MCF 10A (cell line): ENCODE measurements at regions of chr7 and their contacts with region 1.

Region 1: DNA sequence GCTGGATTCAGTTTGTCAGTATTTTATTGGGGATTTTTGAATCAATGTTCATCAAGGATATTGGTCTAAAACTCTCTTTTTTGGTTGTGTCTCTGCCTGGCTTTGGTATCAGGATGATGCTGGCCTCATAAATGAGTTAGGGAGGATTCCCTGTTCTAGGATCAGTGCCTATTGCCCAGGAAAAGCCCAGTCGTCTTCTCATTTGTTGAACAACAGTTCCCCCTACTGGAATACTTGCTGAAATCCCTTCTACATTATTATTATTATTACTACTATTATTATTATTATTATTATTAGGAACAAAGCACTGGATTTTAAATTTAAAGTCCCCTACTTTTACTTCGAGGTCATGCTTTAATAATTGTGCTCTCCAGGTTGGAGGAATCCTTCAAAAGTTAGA is 528.9 kb downstream of the MAGI2 start:
- DNase-seq: peak; percentile 24
- H3K4me3 Mint-ChIP-seq: no peak overlapping the region
- H3K27ac Mint-ChIP-seq: no peak overlapping the region
- H3K4me1 Mint-ChIP-seq: no peaks in the 10 kb centered on the region
- H3K27me3 Mint-ChIP-seq: peaks cover 23% of the 10 kb centered on the region
- CTCF ChIP-seq: peak; percentile 43

Region 2: GRCh38 chr7:77657427-77658224 is 1267.0 kb before region 1 on chr7:
- CTCF ChIA-PET with region 1: no interaction called
- POLR2A ChIA-PET with region 1: no interaction called
- intact Hi-C with region 1: loop called (anchors 10 kb)
- DNase-seq: peak; percentile 65
- H3K4me3 Mint-ChIP-seq: no peak overlapping the region
- H3K27ac Mint-ChIP-seq: no peak overlapping the region
- H3K4me1 Mint-ChIP-seq: peaks cover 2% of the 10 kb centered on the region
- H3K27me3 Mint-ChIP-seq: no peaks in the 10 kb centered on the region
- CTCF ChIP-seq: peak; percentile 56

Region 3: GRCh38 chr7:78510580-78511188 is 413.9 kb before region 1 on chr7:
- CTCF ChIA-PET with region 1: no interaction called
- POLR2A ChIA-PET with region 1: no interaction called
- intact Hi-C with region 1: loop called (anchors 2 kb)
- DNase-seq: peak; percentile 51
- H3K4me3 Mint-ChIP-seq: no peak overlapping the region
- H3K27ac Mint-ChIP-seq: no peak overlapping the region
- H3K4me1 Mint-ChIP-seq: no peaks in the 10 kb centered on the region
- H3K27me3 Mint-ChIP-seq: peaks cover 55% of the 10 kb centered on the region
- CTCF ChIP-seq: peak; percentile 65

Region 4: GRCh38 chr7:78587443-78588044 is 337.0 kb before region 1 on chr7:
- CTCF ChIA-PET with region 1: no interaction called
- POLR2A ChIA-PET with region 1: no interaction called
- intact Hi-C with region 1: loop called (anchors 10 kb)
- DNase-seq: peak; percentile 32
- H3K4me3 Mint-ChIP-seq: no peak overlapping the region
- H3K27ac Mint-ChIP-seq: no peak overlapping the region
- H3K4me1 Mint-ChIP-seq: no peaks in the 10 kb centered on the region
- H3K27me3 Mint-ChIP-seq: peaks cover 68% of the 10 kb centered on the region
- CTCF ChIP-seq: peak; percentile 41